T-cell (primary cell): ENCODE measurements at regions of chr5 and their contacts with region 1.

Region 1: GRCh38 chr5:177027665-177028064 is 5.2 kb downstream of the ZNF346 start:
- DNase-seq: no peak
- ATAC-seq: no peak
- H3K4me3 ChIP-seq: no peak overlapping the region
- H3K4me3 Mint-ChIP-seq: no peak overlapping the region
- H3K27ac ChIP-seq: no peak overlapping the region
- H3K27ac Mint-ChIP-seq: no peak overlapping the region
- H3K4me1 ChIP-seq: peaks cover 2 to 13% of the 10 kb centered on the region in 2 experiments
- H3K4me1 Mint-ChIP-seq: peaks cover 29 to 35% (median 34%) of the 10 kb centered on the region in 3 donors
- H3K27me3 ChIP-seq: no peaks in the 10 kb centered on the region
- H3K27me3 Mint-ChIP-seq: no peaks in the 10 kb centered on the region

Region 2: GRCh38 chr5:177006265-177006972 is 21.2 kb before region 1 on chr5 and contains the start of gene UIMC1:
- CTCF ChIA-PET with region 1: no interaction called
- POLR2A ChIA-PET with region 1: interaction called, 3 to 11 read pairs
- DNase-seq: peak; percentile 73 to 94 (median 87)
- ATAC-seq: peak; percentile 79 to 87 (median 84)
- H3K4me3 ChIP-seq: peak within 1 kb of the TSS; percentile 87 to 95
- H3K4me3 Mint-ChIP-seq: peak within 1 kb of the TSS; percentile 93 to 96 (median 94)
- H3K27ac ChIP-seq: peak within 1 kb of the TSS; percentile 71
- H3K27ac Mint-ChIP-seq: peak within 1 kb of the TSS; percentile 92 to 97
- H3K4me1 ChIP-seq: peaks cover 14 to 22% of the 10 kb centered on the region in 2 experiments
- H3K4me1 Mint-ChIP-seq: peaks cover 27 to 35% (median 32%) of the 10 kb centered on the region in 3 donors
- H3K27me3 ChIP-seq: no peaks in the 10 kb centered on the region
- H3K27me3 Mint-ChIP-seq: no peaks in the 10 kb centered on the region
- total RNA-seq, gene UIMC1: 50.0 to 70.3 (median 56.7) TPM